ENCODE measurements at regions of chr2 and their contacts with region 1.

Region 1: GRCh38 chr2:157443795-157444640 is at the start of gene CYTIP:
- DNase-seq: peak; percentile 72
- H3K4me3 Mint-ChIP-seq: peak within 1 kb of the TSS; percentile 98
- H3K27ac Mint-ChIP-seq: peak within 1 kb of the TSS; percentile 96
- H3K4me1 Mint-ChIP-seq: peaks cover 47% of the 10 kb centered on the region
- H3K27me3 Mint-ChIP-seq: no peaks in the 10 kb centered on the region
- total RNA-seq, gene CYTIP: 199 and 206 TPM in 2 replicates

Region 2: DNA sequence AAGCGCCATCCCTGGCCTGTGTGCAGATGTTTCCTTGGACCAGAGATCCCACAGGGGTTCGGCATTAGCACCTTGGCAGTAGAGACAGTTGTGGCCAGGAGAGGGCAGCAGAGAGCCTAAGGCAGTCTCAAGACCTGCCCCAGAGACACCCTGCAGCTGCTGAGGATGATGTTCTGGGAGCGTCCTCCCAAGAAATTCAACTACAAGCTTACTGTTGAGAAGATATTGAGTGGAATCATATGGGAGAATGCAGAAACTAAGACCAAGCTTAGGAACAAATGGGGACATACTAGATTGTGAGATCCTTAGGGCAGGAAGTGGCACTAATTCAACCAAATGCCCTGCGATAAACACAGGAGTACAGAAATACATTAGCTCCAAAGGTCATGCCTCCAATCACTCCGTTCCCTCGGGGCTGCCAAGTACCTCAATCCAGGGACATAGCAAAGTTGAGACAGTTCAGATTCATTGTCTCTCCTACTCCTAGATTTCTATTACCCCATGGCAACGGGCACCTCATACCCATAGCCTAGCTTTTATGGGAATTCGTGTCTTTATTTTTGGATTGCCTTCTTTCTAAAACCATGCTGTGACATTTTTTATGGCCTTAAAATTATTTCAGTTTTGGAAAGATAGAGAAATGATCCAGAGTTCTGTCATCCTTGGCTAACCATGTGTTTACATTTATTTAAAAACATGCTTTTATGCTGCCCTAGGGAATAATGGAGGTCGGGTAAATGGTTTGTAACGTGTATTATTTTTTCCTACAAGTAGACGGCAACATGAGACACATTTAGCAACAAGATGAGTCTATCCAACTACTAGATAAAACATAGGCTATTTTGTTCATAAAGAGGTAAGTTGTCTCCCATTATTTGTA is 116.2 kb before region 1 on chr2:
- intact Hi-C with region 1: loop called (anchors 1 kb)
- DNase-seq: peak; percentile 72
- H3K4me3 Mint-ChIP-seq: no peak overlapping the region
- H3K27ac Mint-ChIP-seq: no peak overlapping the region
- H3K4me1 Mint-ChIP-seq: peaks cover 31% of the 10 kb centered on the region
- H3K27me3 Mint-ChIP-seq: no peaks in the 10 kb centered on the region

Region 3: GRCh38 chr2:157413326-157414035 is 30.5 kb before region 1 on chr2:
- intact Hi-C with region 1: loop called (anchors 1 kb)
- DNase-seq: peak; percentile 59
- H3K4me3 Mint-ChIP-seq: peak overlapping the region; percentile 74
- H3K27ac Mint-ChIP-seq: peak overlapping the region; percentile 96
- H3K4me1 Mint-ChIP-seq: peaks cover 74% of the 10 kb centered on the region
- H3K27me3 Mint-ChIP-seq: no peaks in the 10 kb centered on the region

Region 4: GRCh38 chr2:157433394-157433793 is 10.6 kb before region 1 on chr2:
- intact Hi-C with region 1: loop called (anchors 1 kb)
- DNase-seq: no peak
- H3K4me3 Mint-ChIP-seq: peak overlapping the region; percentile 81
- H3K27ac Mint-ChIP-seq: peak overlapping the region; percentile 87
- H3K4me1 Mint-ChIP-seq: peaks cover 81% of the 10 kb centered on the region
- H3K27me3 Mint-ChIP-seq: no peaks in the 10 kb centered on the region

Region 5: GRCh38 chr2:157480182-157480961 is 36.4 kb after region 1 on chr2:
- intact Hi-C with region 1: loop called (anchors 1 kb)
- DNase-seq: no peak
- H3K4me3 Mint-ChIP-seq: peak overlapping the region; percentile 68
- H3K27ac Mint-ChIP-seq: peak overlapping the region; percentile 91
- H3K4me1 Mint-ChIP-seq: peaks cover 70% of the 10 kb centered on the region
- H3K27me3 Mint-ChIP-seq: no peaks in the 10 kb centered on the region

Measured in activated T-helper 2 cell treated with anti-CD3 and anti-CD28 coated beads, Interferon-gamma antibody, Interleukin-2, Interleukin-4, amounts not matched to agents 10 μg/mL and 5 μg/mL and 100 μg/mL, durations not matched to agents 14 hours and 24 hours and 36 hours (primary cell).